Ovary (tissue), 10 donors: ENCODE measurements at regions of chr6 and their contacts with region 1.

Region 1: DNA sequence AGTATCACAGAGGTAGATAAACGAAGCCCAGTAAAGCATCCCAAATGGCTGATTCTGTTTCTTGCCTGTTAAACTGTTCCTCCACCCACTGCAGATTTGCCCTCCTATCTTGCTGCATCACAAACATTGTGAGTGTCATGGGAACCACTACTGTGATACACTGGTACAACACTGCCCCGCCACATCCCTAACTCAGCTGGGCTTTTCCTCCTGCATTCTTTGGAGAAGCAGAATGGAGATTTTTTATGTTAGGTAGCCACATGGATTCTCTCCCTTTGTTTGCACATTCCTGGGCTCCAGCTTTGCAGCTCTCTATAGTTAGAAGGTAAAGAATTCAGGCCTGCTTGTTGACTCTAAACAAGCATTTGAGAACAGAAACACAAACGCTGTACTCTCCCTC is 234.1 kb downstream of the TMEM242 start:
- DNase-seq: no peak
- H3K4me3 ChIP-seq: no peak overlapping the region
- H3K27ac ChIP-seq: no peak overlapping the region
- H3K4me1 ChIP-seq: peaks cover 14% of the 10 kb centered on the region
- H3K27me3 ChIP-seq: no peaks in the 10 kb centered on the region
- CTCF ChIP-seq: no peak
- EP300 ChIP-seq: no peak
- POLR2A ChIP-seq: no peak

Region 2: GRCh38 chr6:155530219-155530834 is 1558.9 kb before region 1 on chr6:
- intact Hi-C with region 1: loop called in 1 of 4 experiments (anchors 10 kb)
- DNase-seq: no peak
- H3K4me3 ChIP-seq: no peak overlapping the region
- H3K27ac ChIP-seq: no peak overlapping the region
- H3K4me1 ChIP-seq: no peaks in the 10 kb centered on the region
- H3K27me3 ChIP-seq: no peaks in the 10 kb centered on the region
- CTCF ChIP-seq: peak in 2 of 3 donors; percentile 35 to 45
- EP300 ChIP-seq: no peak
- POLR2A ChIP-seq: no peak

Region 3: GRCh38 chr6:156731396-156731795 is 357.9 kb before region 1 on chr6:
- intact Hi-C with region 1: no loop called
- DNase-seq: no peak
- H3K4me3 ChIP-seq: no peak overlapping the region
- H3K27ac ChIP-seq: no peak overlapping the region
- H3K4me1 ChIP-seq: no peaks in the 10 kb centered on the region
- H3K27me3 ChIP-seq: no peaks in the 10 kb centered on the region
- CTCF ChIP-seq: no peak
- EP300 ChIP-seq: no peak
- POLR2A ChIP-seq: no peak

Region 4: GRCh38 chr6:156794546-156795354 is 294.5 kb before region 1 on chr6:
- intact Hi-C with region 1: no loop called
- DNase-seq: no peak
- H3K4me3 ChIP-seq: no peak overlapping the region
- H3K27ac ChIP-seq: no peak overlapping the region
- H3K4me1 ChIP-seq: peaks cover 28% of the 10 kb centered on the region
- H3K27me3 ChIP-seq: no peaks in the 10 kb centered on the region
- CTCF ChIP-seq: no peak
- EP300 ChIP-seq: no peak
- POLR2A ChIP-seq: no peak

Region 5: GRCh38 chr6:156994215-156995076 is 94.8 kb before region 1 on chr6:
- intact Hi-C with region 1: no loop called
- DNase-seq: no peak
- H3K4me3 ChIP-seq: no peak overlapping the region
- H3K27ac ChIP-seq: no peak overlapping the region
- H3K4me1 ChIP-seq: peaks cover 6% of the 10 kb centered on the region
- H3K27me3 ChIP-seq: no peaks in the 10 kb centered on the region
- CTCF ChIP-seq: no peak
- EP300 ChIP-seq: no peak
- POLR2A ChIP-seq: no peak

Region 6: DNA sequence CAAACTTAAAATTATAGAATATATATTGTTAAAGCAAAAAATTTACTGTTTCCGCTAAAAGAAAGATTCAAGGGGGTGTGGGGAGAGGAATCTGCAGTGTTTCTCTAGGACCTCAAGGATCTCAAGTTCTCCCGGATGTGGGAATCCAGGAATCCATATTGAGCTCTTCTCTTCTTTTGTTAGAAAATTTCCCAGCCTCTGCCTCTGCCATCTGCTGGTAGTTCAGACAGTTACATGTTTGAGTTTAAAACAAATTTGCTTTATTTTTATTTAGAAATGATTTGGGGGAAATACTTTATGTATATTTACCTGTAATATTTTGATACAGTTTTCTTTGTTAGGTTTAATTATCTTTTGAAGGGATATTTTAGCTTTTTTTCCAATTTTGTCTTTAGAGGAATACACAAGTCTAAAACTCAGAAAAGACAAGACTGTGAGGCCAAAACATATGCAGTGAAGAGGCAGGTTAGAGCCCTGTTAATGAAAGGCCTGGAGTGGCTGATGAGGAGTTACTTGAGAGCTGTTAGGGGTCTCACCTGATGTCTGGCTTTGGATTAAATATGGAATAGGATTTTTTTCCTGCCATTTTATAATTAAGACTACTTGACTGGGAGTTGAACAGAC is 43.3 kb before region 1 on chr6:
- intact Hi-C with region 1: no loop called
- DNase-seq: no peak
- H3K4me3 ChIP-seq: no peak overlapping the region
- H3K27ac ChIP-seq: no peak overlapping the region
- H3K4me1 ChIP-seq: peaks cover 8% of the 10 kb centered on the region
- H3K27me3 ChIP-seq: no peaks in the 10 kb centered on the region
- CTCF ChIP-seq: peak; percentile 23 to 26 (median 26)
- EP300 ChIP-seq: no peak
- POLR2A ChIP-seq: no peak